Heart right ventricle (tissue), 16 donors: ENCODE measurements at regions of chr7 and their contacts with region 1.

Region 1: GRCh38 chr7:92134271-92135051 is at the start of gene CYP51A1:
- DNase-seq: peak; percentile 91 to 95
- ATAC-seq: peak; percentile 96 to 98 (median 98)
- H3K4me3 ChIP-seq: peak within 1 kb of the TSS; percentile 77 to 99 (median 89)
- H3K27ac ChIP-seq: peak within 1 kb of the TSS; percentile 90 to 99 (median 94)
- H3K4me1 ChIP-seq: peaks cover 0 to 26% (median 16%) of the 10 kb centered on the region in 9 donors
- H3K27me3 ChIP-seq: no peaks in the 10 kb centered on the region
- CTCF ChIP-seq: peak in 4 of 9 donors; percentile 11 to 27 (median 20)
- total RNA-seq, gene CYP51A1: 20.3 to 45.5 (median 27.0) TPM

Region 2: GRCh38 chr7:92178927-92179924 is 44.8 kb after region 1 on chr7 and contains the start of gene LRRD1:
- intact Hi-C with region 1: loop called in 1 of 10 experiments (anchors 2 kb)
- DNase-seq: peak; percentile 80 to 89
- ATAC-seq: peak; percentile 97 to 100 (median 98)
- H3K4me3 ChIP-seq: peak within 1 kb of the TSS; percentile 39 to 69 (median 63)
- H3K27ac ChIP-seq: peak within 1 kb of the TSS in 9 of 10 donors; percentile 70 to 83 (median 78)
- H3K4me1 ChIP-seq: peaks cover 0 to 14% (median 0%) of the 10 kb centered on the region in 9 donors
- H3K27me3 ChIP-seq: no peaks in the 10 kb centered on the region
- CTCF ChIP-seq: peak; percentile 93 to 100 (median 99)
- total RNA-seq, gene LRRD1: 0.08 to 0.18 (median 0.12) TPM in 4 of 10 donors, not detected in the others

Region 3: GRCh38 chr7:92206019-92206418 is 71.6 kb after region 1 on chr7:
- intact Hi-C with region 1: loop called in 1 of 10 experiments (anchors 10 kb)
- DNase-seq: no peak
- ATAC-seq: no peak
- H3K4me3 ChIP-seq: no peak overlapping the region
- H3K27ac ChIP-seq: no peak overlapping the region
- H3K4me1 ChIP-seq: no peaks in the 10 kb centered on the region
- H3K27me3 ChIP-seq: no peaks in the 10 kb centered on the region
- CTCF ChIP-seq: no peak